ENCODE measurements at regions of chr4 and their contacts with region 1.

Region 1: DNA sequence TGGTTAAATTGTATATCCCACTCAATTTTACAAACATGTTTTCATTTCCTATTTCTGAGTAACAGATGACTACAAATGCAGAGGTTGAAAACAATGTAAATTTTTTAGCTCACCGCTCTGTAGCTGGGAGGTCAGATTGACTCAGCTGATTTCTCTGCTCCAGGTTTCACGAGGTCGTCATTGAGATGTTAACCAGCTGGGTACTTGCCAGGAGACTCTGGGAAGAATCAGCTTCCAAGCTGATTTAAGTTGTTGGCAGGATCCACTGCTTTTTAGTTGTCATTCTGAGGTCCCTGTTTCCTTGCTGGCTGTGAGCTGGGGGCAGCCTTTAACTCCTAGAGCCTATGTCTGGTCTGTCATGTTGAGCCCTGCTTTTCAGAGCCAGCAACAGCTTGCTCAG is 864.3 kb upstream of the AGA start:
- DNase-seq: no peak
- ATAC-seq: no peak
- H3K4me3 ChIP-seq: no peak overlapping the region
- H3K4me3 Mint-ChIP-seq: no peak overlapping the region
- H3K27ac ChIP-seq: no peak overlapping the region
- H3K27ac Mint-ChIP-seq: no peak overlapping the region
- H3K4me1 ChIP-seq: no peaks in the 10 kb centered on the region
- H3K4me1 Mint-ChIP-seq: no peaks in the 10 kb centered on the region
- H3K27me3 ChIP-seq: no peaks in the 10 kb centered on the region
- H3K27me3 Mint-ChIP-seq: no peaks in the 10 kb centered on the region

Region 2: GRCh38 chr4:178165251-178165950 is 141.2 kb before region 1 on chr4:
- CTCF ChIA-PET with region 1: no interaction called
- POLR2A ChIA-PET with region 1: no interaction called
- DNase-seq: no peak
- ATAC-seq: no peak
- H3K4me3 ChIP-seq: no peak overlapping the region
- H3K4me3 Mint-ChIP-seq: no peak overlapping the region
- H3K27ac ChIP-seq: no peak overlapping the region
- H3K27ac Mint-ChIP-seq: no peak overlapping the region
- H3K4me1 ChIP-seq: no peaks in the 10 kb centered on the region
- H3K4me1 Mint-ChIP-seq: no peaks in the 10 kb centered on the region
- H3K27me3 ChIP-seq: no peaks in the 10 kb centered on the region
- H3K27me3 Mint-ChIP-seq: no peaks in the 10 kb centered on the region

Region 3: DNA sequence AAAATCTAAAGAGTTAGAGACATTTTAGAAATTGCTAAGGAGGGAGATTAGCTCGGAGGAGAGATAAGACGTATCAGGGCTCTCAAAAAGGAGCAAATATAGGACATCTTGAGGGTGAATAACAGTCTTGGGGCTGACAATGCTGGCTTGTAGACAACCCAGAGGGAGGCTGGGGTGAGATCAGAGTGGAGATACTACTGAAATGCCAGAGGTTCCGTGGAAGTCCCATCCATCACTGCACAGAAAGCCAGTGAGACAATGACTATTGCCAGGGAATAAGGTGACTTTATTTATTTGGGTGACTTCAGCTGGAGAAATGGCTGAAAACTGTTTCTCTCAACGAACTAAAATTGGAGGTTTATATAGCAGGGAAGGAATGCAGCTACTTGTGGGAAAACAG is 26.2 kb before region 1 on chr4:
- CTCF ChIA-PET with region 1: no interaction called
- POLR2A ChIA-PET with region 1: interaction called in 1 of 2 experiments, 12 read pairs
- DNase-seq: no peak
- ATAC-seq: no peak
- H3K4me3 ChIP-seq: no peak overlapping the region
- H3K4me3 Mint-ChIP-seq: no peak overlapping the region
- H3K27ac ChIP-seq: no peak overlapping the region
- H3K27ac Mint-ChIP-seq: no peak overlapping the region
- H3K4me1 ChIP-seq: no peaks in the 10 kb centered on the region
- H3K4me1 Mint-ChIP-seq: no peaks in the 10 kb centered on the region
- H3K27me3 ChIP-seq: no peaks in the 10 kb centered on the region
- H3K27me3 Mint-ChIP-seq: no peaks in the 10 kb centered on the region

Region 4: GRCh38 chr4:178462715-178463114 is 156.2 kb after region 1 on chr4:
- CTCF ChIA-PET with region 1: no interaction called
- POLR2A ChIA-PET with region 1: no interaction called
- DNase-seq: no peak
- ATAC-seq: no peak
- H3K4me3 ChIP-seq: no peak overlapping the region
- H3K4me3 Mint-ChIP-seq: no peak overlapping the region
- H3K27ac ChIP-seq: no peak overlapping the region
- H3K27ac Mint-ChIP-seq: no peak overlapping the region
- H3K4me1 ChIP-seq: no peaks in the 10 kb centered on the region
- H3K4me1 Mint-ChIP-seq: no peaks in the 10 kb centered on the region
- H3K27me3 ChIP-seq: no peaks in the 10 kb centered on the region
- H3K27me3 Mint-ChIP-seq: no peaks in the 10 kb centered on the region